PC-3 (cell line): ENCODE measurements at regions of chr16 and their contacts with region 1.

Region 1: GRCh38 chr16:30557957-30558788 is at the start of gene ZNF764:
- DNase-seq: peak; percentile 96
- ATAC-seq: peak; percentile 95
- H3K4me3 ChIP-seq: peak within 1 kb of the TSS; percentile 92
- H3K27ac ChIP-seq: peak within 1 kb of the TSS; percentile 78
- H3K4me1 ChIP-seq: peaks cover 3% of the 10 kb centered on the region; the same call in 1 of the 2 replicates
- H3K27me3 ChIP-seq: no peaks in the 10 kb centered on the region
- CTCF ChIP-seq: no peak
- total RNA-seq, gene ZNF764: 8.1 and 12.8 TPM in 2 replicates

Region 2: DNA sequence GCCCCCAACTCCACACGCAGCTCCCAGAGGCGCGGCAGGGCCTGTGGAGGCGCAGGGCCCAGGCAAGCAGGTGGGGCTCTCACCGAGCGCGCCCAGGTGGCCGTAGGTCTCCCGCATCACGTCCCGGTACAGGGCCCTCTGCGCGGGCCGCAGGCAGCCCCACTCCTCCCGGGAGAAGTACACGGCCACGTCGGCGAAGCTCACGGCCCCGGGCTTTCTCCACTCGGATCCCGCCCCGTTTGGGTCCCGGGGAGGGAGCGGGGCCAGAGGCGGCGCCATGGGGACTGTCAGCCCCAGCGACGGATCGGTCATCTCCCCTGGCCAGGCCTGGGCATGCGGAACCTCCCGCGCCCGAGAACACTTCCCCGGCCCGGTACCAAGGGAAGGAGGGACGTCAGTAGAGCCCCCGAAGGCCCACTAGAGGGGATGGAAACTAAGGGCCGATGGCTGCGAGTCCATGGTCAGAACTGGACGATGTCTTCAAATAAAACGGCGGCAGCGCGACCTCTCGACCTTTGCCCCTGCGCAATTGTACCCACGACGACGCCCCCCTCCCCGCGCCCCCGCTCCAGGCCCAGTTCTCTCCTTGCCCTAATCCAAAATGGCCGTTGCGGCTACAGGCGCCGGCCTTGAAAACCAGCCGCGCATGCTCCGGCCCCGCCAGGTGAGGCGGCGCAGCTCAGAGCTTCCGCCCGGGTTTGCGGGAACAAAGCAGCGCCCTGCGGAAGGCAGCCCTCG is 23.6 kb before region 1 on chr16 and contains the start of gene ZNF747:
- CTCF ChIA-PET with region 1: interaction called, 8 read pairs
- POLR2A ChIA-PET with region 1: no interaction called
- intact Hi-C with region 1: loop called (anchors 1 kb)
- DNase-seq: peak; percentile 82
- ATAC-seq: peak; percentile 80
- H3K4me3 ChIP-seq: peak within 1 kb of the TSS; percentile 73
- H3K27ac ChIP-seq: peak within 1 kb of the TSS; percentile 64
- H3K4me1 ChIP-seq: peaks cover 15% of the 10 kb centered on the region
- H3K27me3 ChIP-seq: no peaks in the 10 kb centered on the region
- CTCF ChIP-seq: no peak
- total RNA-seq, gene ZNF747: 7.9 and 8.9 TPM in 2 replicates

Region 3: DNA sequence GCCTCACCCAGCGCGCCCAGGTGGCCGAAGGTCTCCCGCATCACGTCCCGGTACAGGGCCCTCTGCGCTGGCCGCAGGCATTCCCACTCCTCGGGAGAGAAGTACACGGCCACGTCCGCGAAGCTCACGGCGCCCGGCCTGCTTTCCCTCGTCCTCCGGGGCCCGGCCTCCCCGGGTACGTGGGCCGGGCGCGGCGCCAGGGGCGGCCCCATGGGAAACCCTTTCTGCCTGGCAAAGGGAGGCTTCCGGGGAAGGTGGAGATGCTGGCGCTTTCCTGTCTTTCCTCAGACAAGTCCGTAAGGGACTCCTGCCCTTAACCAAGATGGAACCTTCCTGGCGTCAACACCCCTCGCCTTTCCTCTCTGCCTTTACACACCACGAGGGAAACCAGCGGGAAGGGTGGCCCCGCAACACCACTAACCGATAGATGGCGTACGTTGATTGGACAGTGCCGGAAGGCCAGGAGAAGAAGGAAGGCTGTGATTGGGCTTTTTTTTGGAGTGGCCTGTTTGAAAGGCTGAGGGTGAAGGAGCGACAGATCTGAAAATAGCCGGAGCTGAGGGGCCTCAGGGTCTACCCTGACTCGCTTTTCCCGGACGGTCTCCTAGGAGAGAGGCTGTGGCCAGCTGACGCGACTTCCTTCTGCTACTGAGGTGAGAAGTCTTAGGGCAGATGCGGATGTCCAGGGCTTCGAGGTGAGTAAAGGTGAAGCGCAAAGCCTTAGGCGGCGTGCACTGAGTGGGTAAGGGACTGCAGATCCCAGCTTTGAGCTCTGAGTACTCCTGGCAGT is 27.4 kb after region 1 on chr16 and contains the start of gene ZNF785:
- CTCF ChIA-PET with region 1: interaction called, 4 read pairs
- POLR2A ChIA-PET with region 1: interaction called, 5 read pairs
- intact Hi-C with region 1: loop called (anchors 1 kb)
- DNase-seq: peak; percentile 97
- ATAC-seq: peak; percentile 96
- H3K4me3 ChIP-seq: peak within 1 kb of the TSS; percentile 83
- H3K27ac ChIP-seq: peak within 1 kb of the TSS; percentile 77
- H3K4me1 ChIP-seq: peaks cover 13% of the 10 kb centered on the region; the same call in 1 of the 2 replicates
- H3K27me3 ChIP-seq: no peaks in the 10 kb centered on the region
- CTCF ChIP-seq: no peak
- total RNA-seq, gene ZNF785: 4.9 and 5.0 TPM in 2 replicates